ENCODE measurements at regions of chr3 and their contacts with region 1.

Region 1: DNA sequence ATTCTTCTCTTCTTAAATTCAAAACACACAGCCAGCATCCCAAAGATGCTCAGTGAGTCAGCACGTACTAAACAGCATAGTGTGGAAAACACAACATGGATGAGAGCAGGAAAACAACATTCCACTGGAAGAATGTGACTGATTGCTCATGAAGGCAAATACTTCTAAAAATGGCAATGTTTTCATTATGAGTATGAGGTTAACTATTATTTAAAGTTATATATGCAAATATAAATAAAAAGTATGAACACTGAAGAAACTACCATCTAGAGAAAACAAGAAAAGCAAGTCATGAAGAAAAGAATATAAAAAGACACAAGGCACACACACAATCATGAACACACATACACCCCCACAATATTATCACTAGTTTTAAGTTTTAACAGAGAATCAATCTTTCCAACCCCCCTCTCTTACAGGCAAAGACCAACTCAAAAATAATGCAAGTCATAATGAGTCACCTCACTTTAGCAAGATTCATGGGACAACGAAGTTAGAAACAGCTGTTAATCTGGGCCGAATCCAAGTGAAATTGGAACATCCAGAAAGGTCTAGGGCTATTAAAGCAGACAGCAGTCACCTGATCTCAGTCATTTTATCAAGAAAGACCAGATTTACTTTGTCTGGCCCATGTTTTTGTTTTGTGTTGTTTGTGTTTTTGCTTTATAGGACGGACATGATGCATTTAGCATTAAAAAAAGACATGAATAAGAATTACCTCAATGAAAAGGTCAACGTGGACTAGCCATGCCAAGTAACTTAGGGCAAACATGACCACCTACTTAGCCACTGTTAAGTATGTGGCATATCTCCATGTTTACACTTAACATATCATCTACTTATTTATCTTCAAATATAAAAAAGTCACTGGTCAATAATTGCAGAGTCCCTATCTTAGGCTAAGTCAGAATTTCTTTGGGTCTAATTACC is 18.1 kb downstream of the GBE1 start:
- DNase-seq: peak; percentile 97
- H3K4me3 ChIP-seq: peak overlapping the region in 1 of 3 experiments; percentile 12
- H3K27ac ChIP-seq: peak overlapping the region; percentile 98
- H3K4me1 ChIP-seq: peaks cover 46% of the 10 kb centered on the region
- H3K27me3 ChIP-seq: no peaks in the 10 kb centered on the region
- CTCF ChIP-seq: no peak
- POLR2A ChIP-seq: peak; percentile 50

Region 2: GRCh38 chr3:81666493-81667121 is 76.8 kb before region 1 on chr3:
- CTCF ChIA-PET with region 1: interaction called, 5 read pairs
- POLR2A ChIA-PET with region 1: no interaction called
- dilution Hi-C with region 1: no loop called
- intact Hi-C with region 1: loop called (anchors 5 kb)
- DNase-seq: peak; percentile 60
- H3K4me3 ChIP-seq: no peak overlapping the region
- H3K27ac ChIP-seq: no peak overlapping the region
- H3K4me1 ChIP-seq: no peaks in the 10 kb centered on the region
- H3K27me3 ChIP-seq: no peaks in the 10 kb centered on the region
- CTCF ChIP-seq: peak; percentile 43 to 52
- POLR2A ChIP-seq: no peak

Region 3: DNA sequence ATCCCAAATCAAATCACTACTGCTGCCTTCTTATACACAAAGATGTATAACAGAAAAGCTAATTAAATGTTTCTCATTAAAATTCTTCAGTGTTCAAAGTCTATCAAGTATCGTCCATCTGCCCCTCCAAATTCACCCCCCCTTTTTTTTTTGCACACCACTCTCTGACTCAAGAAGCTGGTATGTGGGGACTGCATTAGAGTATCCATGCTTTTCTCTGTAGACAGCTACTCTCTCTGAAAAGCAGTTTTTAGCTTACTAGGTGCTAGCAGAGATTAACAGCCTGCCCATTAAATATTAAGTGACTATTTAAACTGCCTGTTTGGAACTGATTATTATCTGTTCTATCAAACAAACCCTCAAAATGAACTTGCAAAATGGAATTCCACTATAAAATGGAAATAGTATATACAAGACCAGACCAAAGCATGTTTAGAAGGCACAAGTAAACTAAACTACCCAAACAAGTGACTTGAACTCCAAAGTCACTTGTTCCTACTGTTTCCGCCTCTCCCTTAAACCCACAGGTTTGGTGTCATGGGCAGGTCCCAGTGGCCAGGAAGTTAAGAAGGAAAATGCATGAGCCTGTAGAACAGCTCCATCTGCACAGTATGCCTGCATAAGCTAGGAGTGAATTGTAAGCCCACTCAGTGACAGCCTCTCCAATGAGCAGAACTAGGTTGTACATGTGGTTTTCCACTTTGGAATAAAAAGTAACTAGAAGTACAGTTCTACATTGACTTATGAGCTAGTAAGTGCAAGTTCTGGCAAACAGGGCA is 14.4 kb before region 1 on chr3:
- CTCF ChIA-PET with region 1: interaction called, 14 read pairs
- POLR2A ChIA-PET with region 1: interaction called, 4 read pairs
- dilution Hi-C with region 1: no loop called
- intact Hi-C with region 1: loop called (anchors 1 kb)
- DNase-seq: peak; percentile 47
- H3K4me3 ChIP-seq: no peak overlapping the region
- H3K27ac ChIP-seq: peak overlapping the region; percentile 97
- H3K4me1 ChIP-seq: peaks cover 48% of the 10 kb centered on the region
- H3K27me3 ChIP-seq: no peaks in the 10 kb centered on the region
- CTCF ChIP-seq: no peak
- POLR2A ChIP-seq: no peak

Region 4: DNA sequence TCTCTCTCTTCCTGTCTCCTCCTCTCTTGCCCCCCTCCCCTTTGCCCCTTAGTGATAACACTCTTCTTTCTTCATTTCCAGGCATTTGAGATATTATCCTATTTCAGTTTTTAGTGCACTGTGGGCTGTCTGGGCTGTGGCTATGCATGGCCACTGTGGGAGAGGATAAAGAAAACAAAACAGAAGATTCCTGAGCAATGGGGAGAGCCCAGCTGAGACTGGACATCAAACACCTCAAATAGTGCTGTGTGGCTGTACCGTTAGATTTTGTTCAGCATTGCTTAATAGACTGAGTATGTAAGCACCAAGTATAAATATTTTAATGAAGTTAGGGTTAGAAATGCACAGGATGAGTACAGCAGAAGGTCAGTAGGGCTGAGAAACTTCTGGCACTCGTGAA is 25.9 kb after region 1 on chr3:
- CTCF ChIA-PET with region 1: no interaction called
- POLR2A ChIA-PET with region 1: no interaction called
- dilution Hi-C with region 1: no loop called
- intact Hi-C with region 1: no loop called
- DNase-seq: no peak
- H3K4me3 ChIP-seq: no peak overlapping the region
- H3K27ac ChIP-seq: no peak overlapping the region
- H3K4me1 ChIP-seq: no peaks in the 10 kb centered on the region
- H3K27me3 ChIP-seq: no peaks in the 10 kb centered on the region
- CTCF ChIP-seq: no peak
- POLR2A ChIP-seq: no peak

Region 5: GRCh38 chr3:81998139-81998755 is 254.9 kb after region 1 on chr3:
- CTCF ChIA-PET with region 1: no interaction called
- POLR2A ChIA-PET with region 1: no interaction called
- dilution Hi-C with region 1: no loop called
- intact Hi-C with region 1: no loop called
- DNase-seq: peak; percentile 26
- H3K4me3 ChIP-seq: no peak overlapping the region
- H3K27ac ChIP-seq: no peak overlapping the region
- H3K4me1 ChIP-seq: no peaks in the 10 kb centered on the region
- H3K27me3 ChIP-seq: peaks cover 0 to 3% of the 10 kb centered on the region in 2 experiments
- CTCF ChIP-seq: no peak
- POLR2A ChIP-seq: no peak

Region 6: DNA sequence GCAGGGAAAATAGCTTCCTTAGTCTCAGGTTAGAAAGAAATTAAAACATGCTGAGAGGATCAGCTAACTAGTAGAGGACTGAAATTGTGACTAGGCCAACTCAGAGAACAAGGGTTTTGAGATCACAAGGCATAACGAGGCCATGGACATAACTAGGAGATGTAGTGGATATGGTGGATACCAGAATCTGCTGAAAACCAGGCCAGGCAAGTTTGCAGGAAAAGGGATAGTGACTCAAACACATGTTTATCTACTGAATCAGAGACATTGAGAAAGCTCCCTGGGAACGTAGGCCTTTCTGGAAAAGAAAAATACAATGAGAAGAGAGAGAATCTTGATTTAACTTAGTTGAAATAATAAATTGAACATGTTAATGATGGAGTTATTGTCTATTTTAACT is 344.6 kb after region 1 on chr3:
- CTCF ChIA-PET with region 1: no interaction called
- POLR2A ChIA-PET with region 1: no interaction called
- dilution Hi-C with region 1: no loop called
- intact Hi-C with region 1: loop called (anchors 2 kb)
- DNase-seq: peak; percentile 82
- H3K4me3 ChIP-seq: no peak overlapping the region
- H3K27ac ChIP-seq: peak overlapping the region; percentile 70
- H3K4me1 ChIP-seq: peaks cover 45% of the 10 kb centered on the region
- H3K27me3 ChIP-seq: no peaks in the 10 kb centered on the region
- CTCF ChIP-seq: no peak
- POLR2A ChIP-seq: no peak

Measured in endothelial cell of umbilical vein (primary cell).